B cell (primary cell): ENCODE measurements at regions of chr11 and their contacts with region 1.

Region 1: GRCh38 chr11:8006349-8006977 is 19.3 kb downstream of the EIF3F start:
- DNase-seq: peak; percentile 57
- ATAC-seq: peak; percentile 45
- H3K4me3 ChIP-seq: no peak overlapping the region
- H3K4me3 Mint-ChIP-seq: no peak overlapping the region
- H3K27ac ChIP-seq: no peak overlapping the region
- H3K27ac Mint-ChIP-seq: no peak overlapping the region
- H3K4me1 ChIP-seq: no peaks in the 10 kb centered on the region
- H3K4me1 Mint-ChIP-seq: no peaks in the 10 kb centered on the region
- H3K27me3 ChIP-seq: peaks cover 0 to 2% (median 0%) of the 10 kb centered on the region in 4 experiments
- H3K27me3 Mint-ChIP-seq: peaks cover 14% of the 10 kb centered on the region
- CTCF ChIP-seq: peak; percentile 69

Region 2: GRCh38 chr11:8033305-8034105 is 27.0 kb after region 1 on chr11:
- CTCF ChIA-PET with region 1: interaction called, 11 read pairs
- POLR2A ChIA-PET with region 1: no interaction called
- intact Hi-C with region 1: no loop called
- DNase-seq: peak; percentile 69
- ATAC-seq: peak; percentile 83
- H3K4me3 ChIP-seq: no peak overlapping the region
- H3K4me3 Mint-ChIP-seq: no peak overlapping the region
- H3K27ac ChIP-seq: no peak overlapping the region
- H3K27ac Mint-ChIP-seq: no peak overlapping the region
- H3K4me1 ChIP-seq: peaks cover 0 to 8% of the 10 kb centered on the region in 2 donors
- H3K4me1 Mint-ChIP-seq: peaks cover 6% of the 10 kb centered on the region
- H3K27me3 ChIP-seq: peaks cover 0 to 31% (median 9%) of the 10 kb centered on the region in 4 experiments
- H3K27me3 Mint-ChIP-seq: peaks cover 45% of the 10 kb centered on the region
- CTCF ChIP-seq: peak; percentile 86

Region 3: DNA sequence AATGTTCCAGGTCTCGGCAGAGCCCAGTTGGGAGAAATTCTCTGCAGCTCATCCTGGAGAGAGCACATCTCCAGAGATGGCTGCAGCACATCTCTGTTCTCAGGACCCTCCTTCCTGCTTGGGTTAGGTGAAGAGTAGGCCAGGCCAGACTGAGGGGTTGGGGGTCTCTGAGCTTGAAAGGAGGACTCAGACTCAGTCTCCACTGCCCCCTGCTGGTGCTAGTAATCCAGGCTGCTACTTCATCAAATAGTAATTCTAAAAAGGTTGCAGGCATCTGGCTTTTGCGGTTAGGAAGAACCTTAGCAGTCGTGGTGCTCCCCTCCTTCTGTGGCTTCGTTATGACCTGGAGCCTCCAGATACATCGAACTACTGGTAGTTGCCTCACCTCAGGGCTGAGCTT is 84.3 kb after region 1 on chr11:
- CTCF ChIA-PET with region 1: interaction called, 121 read pairs
- POLR2A ChIA-PET with region 1: no interaction called
- intact Hi-C with region 1: no loop called
- DNase-seq: no peak
- ATAC-seq: no peak
- H3K4me3 ChIP-seq: no peak overlapping the region
- H3K4me3 Mint-ChIP-seq: no peak overlapping the region
- H3K27ac ChIP-seq: no peak overlapping the region
- H3K27ac Mint-ChIP-seq: no peak overlapping the region
- H3K4me1 ChIP-seq: peaks cover 0 to 5% of the 10 kb centered on the region in 2 donors
- H3K4me1 Mint-ChIP-seq: peaks cover 2% of the 10 kb centered on the region
- H3K27me3 ChIP-seq: peaks cover 0 to 11% (median 0%) of the 10 kb centered on the region in 4 experiments
- H3K27me3 Mint-ChIP-seq: peaks cover 10% of the 10 kb centered on the region
- CTCF ChIP-seq: peak; percentile 16

Region 4: DNA sequence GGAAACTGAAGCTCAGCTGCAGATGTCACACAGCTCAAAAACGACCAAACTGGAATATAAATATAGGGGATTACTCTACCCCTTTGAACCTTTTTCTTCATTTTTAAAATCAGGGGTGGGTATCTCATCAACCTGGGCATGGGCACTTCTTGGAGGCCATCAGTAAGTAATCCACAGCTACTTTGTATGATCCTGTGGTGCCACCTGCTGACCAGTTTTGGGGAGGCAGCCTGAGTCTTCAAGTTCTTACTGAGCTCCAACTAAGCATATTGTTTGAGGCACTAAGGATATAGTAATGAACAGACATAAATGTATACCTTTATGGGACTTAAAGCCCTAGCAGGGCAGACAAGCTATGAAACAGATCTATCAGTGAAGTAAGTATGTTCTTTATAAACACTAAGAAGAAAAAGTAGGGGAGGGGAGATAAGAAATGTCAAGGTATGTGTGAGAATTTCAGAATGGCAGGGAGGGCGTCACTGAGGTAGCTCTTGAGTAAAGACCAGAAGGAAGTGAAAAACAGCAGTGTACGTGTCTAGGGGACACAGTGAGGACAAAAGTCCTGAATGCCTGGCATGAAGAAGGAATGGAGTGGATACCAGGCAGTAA is 92.9 kb after region 1 on chr11:
- CTCF ChIA-PET with region 1: interaction called, 121 read pairs
- POLR2A ChIA-PET with region 1: no interaction called
- intact Hi-C with region 1: no loop called
- DNase-seq: peak; percentile 69
- ATAC-seq: peak; percentile 64
- H3K4me3 ChIP-seq: no peak overlapping the region
- H3K4me3 Mint-ChIP-seq: no peak overlapping the region
- H3K27ac ChIP-seq: no peak overlapping the region
- H3K27ac Mint-ChIP-seq: no peak overlapping the region
- H3K4me1 ChIP-seq: no peaks in the 10 kb centered on the region
- H3K4me1 Mint-ChIP-seq: peaks cover 2% of the 10 kb centered on the region
- H3K27me3 ChIP-seq: no peaks in the 10 kb centered on the region
- H3K27me3 Mint-ChIP-seq: no peaks in the 10 kb centered on the region
- CTCF ChIP-seq: peak; percentile 88